ENCODE measurements at regions of chr9 and their contacts with region 1.

Region 1: GRCh38 chr9:127586537-127586936 is 25.5 kb upstream of the STXBP1 start:
- DNase-seq: peak; percentile 75
- ATAC-seq: peak; percentile 94
- H3K4me3 ChIP-seq: no peak overlapping the region
- H3K27ac ChIP-seq: no peak overlapping the region
- H3K4me1 ChIP-seq: peaks cover 25% of the 10 kb centered on the region
- H3K27me3 ChIP-seq: no peaks in the 10 kb centered on the region
- CTCF ChIP-seq: peak; percentile 96
- EP300 ChIP-seq: no peak
- POLR2A ChIP-seq: no peak
- RAD21 ChIP-seq: peak; percentile 90

Region 2: DNA sequence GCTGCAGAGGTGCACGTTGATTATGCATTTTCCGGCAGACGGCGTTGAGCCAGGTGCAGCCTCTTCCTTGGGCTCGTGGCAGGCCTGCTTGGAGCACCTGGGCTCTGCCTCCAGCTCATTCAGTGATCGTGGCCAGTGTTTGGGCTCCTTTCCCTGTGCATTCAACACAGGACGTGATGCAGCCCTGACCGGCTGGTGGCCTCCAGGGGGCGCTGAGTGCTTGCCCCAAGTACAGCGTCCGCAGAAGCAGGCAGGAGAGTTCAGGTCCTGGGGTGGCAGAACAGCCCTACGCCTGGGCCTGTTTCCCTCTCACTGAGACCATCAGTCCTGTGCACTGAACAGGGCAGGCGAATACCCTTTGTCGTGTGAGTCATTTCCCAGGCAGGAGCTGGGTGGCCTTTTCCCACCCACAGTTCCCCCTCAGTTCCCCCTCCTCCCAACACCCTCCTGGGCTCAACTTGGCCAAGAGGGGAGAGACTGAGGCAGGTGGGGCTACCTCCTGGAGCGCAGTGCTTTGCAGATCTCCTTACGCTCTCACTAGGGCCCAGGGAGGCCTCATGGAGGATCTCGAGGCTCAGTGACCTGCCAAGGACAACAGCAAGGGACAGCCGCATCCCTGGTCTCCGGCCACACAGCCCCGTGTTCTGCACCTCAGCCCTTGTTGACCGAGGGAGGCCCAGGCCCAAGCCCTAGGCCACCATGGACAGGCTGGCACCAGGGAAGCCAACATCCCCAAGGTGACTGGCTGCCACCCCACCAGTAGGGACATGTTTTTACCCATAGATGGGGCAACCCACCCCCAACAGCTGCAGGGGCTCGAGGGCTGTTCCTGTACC is 82.4 kb before region 1 on chr9:
- CTCF ChIA-PET with region 1: interaction called, 48 read pairs
- POLR2A ChIA-PET with region 1: interaction called, 3 read pairs
- in situ Hi-C with region 1: loop called (anchors 5 kb)
- intact Hi-C with region 1: loop called (anchors 1 kb)
- DNase-seq: peak; percentile 70
- ATAC-seq: peak; percentile 84
- H3K4me3 ChIP-seq: no peak overlapping the region
- H3K27ac ChIP-seq: no peak overlapping the region
- H3K4me1 ChIP-seq: no peaks in the 10 kb centered on the region
- H3K27me3 ChIP-seq: no peaks in the 10 kb centered on the region
- CTCF ChIP-seq: peak; percentile 97
- EP300 ChIP-seq: no peak
- POLR2A ChIP-seq: no peak
- RAD21 ChIP-seq: peak; percentile 95

Region 3: DNA sequence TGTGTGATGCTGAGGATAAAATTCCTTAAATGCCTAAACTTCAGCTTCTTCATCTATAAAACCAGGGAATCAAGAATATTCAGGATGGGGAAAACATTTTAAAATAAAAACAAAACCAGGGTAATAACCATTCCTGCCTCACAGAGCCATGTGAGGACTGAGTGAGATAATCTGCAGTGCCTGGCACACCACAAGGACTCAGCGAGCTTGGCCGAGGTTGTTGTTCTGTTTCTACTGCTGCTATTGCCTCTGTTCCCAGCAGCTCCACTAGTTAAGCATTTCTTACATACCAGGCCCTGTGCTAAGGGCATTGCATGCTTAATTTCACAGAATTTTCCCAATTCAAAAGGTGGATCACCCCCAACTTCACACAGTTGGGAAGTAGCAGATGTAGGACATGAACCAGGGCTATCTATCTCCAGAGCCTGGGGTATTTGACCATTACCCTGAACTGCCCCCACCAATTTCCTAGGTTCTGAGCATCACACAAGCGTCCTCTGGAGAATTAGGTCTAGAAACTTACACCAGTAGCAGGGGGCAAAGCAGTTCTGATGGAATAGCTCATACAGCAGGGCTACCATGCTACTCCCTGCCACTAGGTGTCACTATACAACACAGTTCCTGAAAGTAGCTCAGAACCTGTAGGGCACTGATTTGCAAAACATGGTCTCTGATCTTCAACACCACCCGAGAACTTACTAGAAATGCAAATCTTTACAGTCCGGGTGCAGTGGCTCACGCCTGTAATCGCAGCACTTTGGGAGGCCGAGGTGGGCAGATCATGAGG is 60.9 kb before region 1 on chr9:
- CTCF ChIA-PET with region 1: interaction called, 10 read pairs
- POLR2A ChIA-PET with region 1: interaction called, 3 read pairs
- in situ Hi-C with region 1: no loop called
- intact Hi-C with region 1: no loop called
- DNase-seq: peak; percentile 26
- ATAC-seq: no peak
- H3K4me3 ChIP-seq: no peak overlapping the region
- H3K27ac ChIP-seq: no peak overlapping the region
- H3K4me1 ChIP-seq: 0 out of 2 replicates have a peak, but pooled peaks cover 8% of the 10 kb centered on the region
- H3K27me3 ChIP-seq: no peaks in the 10 kb centered on the region
- CTCF ChIP-seq: peak; percentile 72
- EP300 ChIP-seq: no peak
- POLR2A ChIP-seq: no peak
- RAD21 ChIP-seq: no peak

Region 4: GRCh38 chr9:127568971-127569885 is 17.3 kb before region 1 on chr9:
- CTCF ChIA-PET with region 1: no interaction called
- POLR2A ChIA-PET with region 1: no interaction called
- in situ Hi-C with region 1: no loop called
- intact Hi-C with region 1: no loop called
- DNase-seq: peak; percentile 55
- ATAC-seq: peak; percentile 57
- H3K4me3 ChIP-seq: peak overlapping the region; percentile 75 to 86 (median 84)
- H3K27ac ChIP-seq: peak overlapping the region; percentile 46
- H3K4me1 ChIP-seq: peaks cover 58% of the 10 kb centered on the region
- H3K27me3 ChIP-seq: no peaks in the 10 kb centered on the region; a peak in 2 of 5 replicates
- CTCF ChIP-seq: no peak
- EP300 ChIP-seq: no peak
- POLR2A ChIP-seq: peak in 1 of 2 experiments; percentile 48; a peak in 1 of 4 replicates
- RAD21 ChIP-seq: no peak